Activated CD4-positive, alpha-beta memory T cell treated with anti-CD3 and anti-CD28 coated beads for 36 hours (primary cell): ENCODE measurements at regions of chr4 and their contacts with region 1.

Region 1: GRCh38 chr4:48906206-48907173 is at the start of gene OCIAD2:
- DNase-seq: peak; percentile 90
- H3K4me3 Mint-ChIP-seq: peak within 1 kb of the TSS; percentile 84
- H3K27ac Mint-ChIP-seq: peak within 1 kb of the TSS; percentile 88
- H3K4me1 Mint-ChIP-seq: peaks cover 46% of the 10 kb centered on the region
- H3K27me3 Mint-ChIP-seq: no peaks in the 10 kb centered on the region
- total RNA-seq, gene OCIAD2: 54.2 to 71.6 TPM

Region 2: GRCh38 chr4:48212165-48212564 is 694.3 kb before region 1 on chr4:
- CTCF ChIA-PET with region 1: no interaction called
- POLR2A ChIA-PET with region 1: no interaction called
- intact Hi-C with region 1: no loop called
- DNase-seq: no peak
- H3K4me3 Mint-ChIP-seq: no peak overlapping the region
- H3K27ac Mint-ChIP-seq: no peak overlapping the region
- H3K4me1 Mint-ChIP-seq: no peaks in the 10 kb centered on the region
- H3K27me3 Mint-ChIP-seq: no peaks in the 10 kb centered on the region

Region 3: DNA sequence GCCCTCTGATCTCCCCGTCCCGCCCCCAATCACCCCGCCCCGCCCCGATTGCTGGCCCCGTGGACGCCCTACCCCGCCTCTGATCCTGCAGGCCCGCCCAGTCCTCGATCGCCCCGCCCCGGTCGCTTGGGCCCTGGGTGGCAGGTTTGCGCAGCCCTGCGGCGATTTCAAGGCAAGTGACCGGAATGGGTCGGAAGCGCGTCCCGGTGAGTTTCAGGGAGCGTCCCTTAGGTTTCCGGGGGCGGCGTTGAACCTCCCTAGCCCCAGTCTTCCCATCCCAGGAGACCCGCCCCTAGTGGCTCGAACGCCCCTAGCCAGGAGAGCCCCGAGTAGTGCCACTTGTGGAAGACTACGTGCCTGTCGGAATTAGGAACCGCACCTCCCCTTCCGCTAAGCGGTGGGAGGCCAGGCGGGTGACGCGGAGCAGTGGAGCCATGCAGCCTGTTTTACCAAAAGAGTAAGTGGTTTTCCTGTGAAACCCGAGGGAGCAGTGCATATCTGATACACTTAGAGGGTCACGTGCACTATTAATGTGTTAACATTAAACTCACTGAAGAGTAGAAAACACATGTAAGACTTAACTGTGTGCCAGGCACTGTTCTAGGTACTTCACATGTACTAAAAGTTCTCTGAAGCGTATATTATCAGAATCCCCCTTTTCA is 636.5 kb before region 1 on chr4:
- CTCF ChIA-PET with region 1: no interaction called
- POLR2A ChIA-PET with region 1: no interaction called
- intact Hi-C with region 1: loop called (anchors 5 kb)
- DNase-seq: peak; percentile 95
- H3K4me3 Mint-ChIP-seq: peak overlapping the region; percentile 91
- H3K27ac Mint-ChIP-seq: peak overlapping the region; percentile 75
- H3K4me1 Mint-ChIP-seq: peaks cover 23% of the 10 kb centered on the region
- H3K27me3 Mint-ChIP-seq: no peaks in the 10 kb centered on the region

Region 4: GRCh38 chr4:48557478-48557877 is 349.0 kb before region 1 on chr4:
- CTCF ChIA-PET with region 1: interaction called, 4 read pairs
- POLR2A ChIA-PET with region 1: no interaction called
- intact Hi-C with region 1: loop called (anchors 5 kb)
- DNase-seq: peak; percentile 26
- H3K4me3 Mint-ChIP-seq: no peak overlapping the region
- H3K27ac Mint-ChIP-seq: no peak overlapping the region
- H3K4me1 Mint-ChIP-seq: peaks cover 4% of the 10 kb centered on the region
- H3K27me3 Mint-ChIP-seq: no peaks in the 10 kb centered on the region

Region 5: GRCh38 chr4:48578132-48578968 is 328.1 kb before region 1 on chr4:
- CTCF ChIA-PET with region 1: interaction called, 3 read pairs
- POLR2A ChIA-PET with region 1: no interaction called
- intact Hi-C with region 1: loop called (anchors 1 kb)
- DNase-seq: peak; percentile 37
- H3K4me3 Mint-ChIP-seq: no peak overlapping the region
- H3K27ac Mint-ChIP-seq: no peak overlapping the region
- H3K4me1 Mint-ChIP-seq: peaks cover 4% of the 10 kb centered on the region
- H3K27me3 Mint-ChIP-seq: no peaks in the 10 kb centered on the region

Region 6: GRCh38 chr4:48830706-48831531 is 75.6 kb before region 1 on chr4 and contains the start of gene OCIAD1:
- CTCF ChIA-PET with region 1: no interaction called
- POLR2A ChIA-PET with region 1: interaction called, 5 read pairs
- intact Hi-C with region 1: loop called (anchors 1 kb)
- DNase-seq: peak; percentile 97
- H3K4me3 Mint-ChIP-seq: peak within 1 kb of the TSS; percentile 100
- H3K27ac Mint-ChIP-seq: peak within 1 kb of the TSS; percentile 99
- H3K4me1 Mint-ChIP-seq: peaks cover 19% of the 10 kb centered on the region
- H3K27me3 Mint-ChIP-seq: peaks cover 2% of the 10 kb centered on the region
- total RNA-seq, gene OCIAD1: 100 to 107 TPM

Region 7: GRCh38 chr4:48924416-48924815 is 17.9 kb after region 1 on chr4:
- CTCF ChIA-PET with region 1: no interaction called
- POLR2A ChIA-PET with region 1: no interaction called
- intact Hi-C with region 1: no loop called
- DNase-seq: no peak
- H3K4me3 Mint-ChIP-seq: no peak overlapping the region
- H3K27ac Mint-ChIP-seq: no peak overlapping the region
- H3K4me1 Mint-ChIP-seq: peaks cover 4% of the 10 kb centered on the region
- H3K27me3 Mint-ChIP-seq: no peaks in the 10 kb centered on the region

Region 8: GRCh38 chr4:48944756-48945241 is 38.3 kb after region 1 on chr4:
- CTCF ChIA-PET with region 1: interaction called, 6 read pairs
- POLR2A ChIA-PET with region 1: no interaction called
- intact Hi-C with region 1: loop called (anchors 2 kb)
- DNase-seq: peak; percentile 65
- H3K4me3 Mint-ChIP-seq: no peak overlapping the region
- H3K27ac Mint-ChIP-seq: no peak overlapping the region
- H3K4me1 Mint-ChIP-seq: peaks cover 9% of the 10 kb centered on the region
- H3K27me3 Mint-ChIP-seq: peaks cover 2% of the 10 kb centered on the region

Region 9: DNA sequence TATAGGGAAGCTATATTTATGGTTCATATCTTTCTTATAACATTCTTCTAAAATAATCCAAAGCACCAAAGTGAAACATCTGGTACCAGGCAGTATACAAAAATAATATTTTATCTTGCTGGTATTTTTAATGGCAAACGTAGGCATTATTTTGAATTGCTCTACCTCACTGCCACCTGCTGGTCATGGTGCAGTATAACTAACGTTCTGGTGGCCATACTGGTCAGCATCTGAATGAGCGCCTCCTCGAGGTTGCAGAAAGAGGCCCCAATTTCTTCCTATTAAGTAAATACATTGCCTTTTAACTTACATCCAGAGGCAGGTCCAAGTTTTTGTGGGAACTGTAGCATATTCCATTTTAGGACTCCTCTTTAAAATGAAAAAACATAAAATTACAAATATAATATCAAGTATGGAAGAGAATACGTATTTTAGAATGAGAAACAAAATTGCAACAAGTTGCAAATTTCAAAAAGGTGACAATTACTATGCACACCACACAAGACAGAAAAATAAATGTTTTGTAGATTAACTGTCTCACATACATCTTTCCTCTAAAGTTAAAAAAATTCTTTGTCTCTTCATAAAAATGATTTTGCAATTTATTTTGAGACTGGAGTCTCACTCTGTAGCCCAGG is 56.7 kb after region 1 on chr4:
- CTCF ChIA-PET with region 1: no interaction called
- POLR2A ChIA-PET with region 1: no interaction called
- intact Hi-C with region 1: loop called (anchors 2 kb)
- DNase-seq: peak; percentile 77
- H3K4me3 Mint-ChIP-seq: no peak overlapping the region
- H3K27ac Mint-ChIP-seq: no peak overlapping the region
- H3K4me1 Mint-ChIP-seq: no peaks in the 10 kb centered on the region
- H3K27me3 Mint-ChIP-seq: no peaks in the 10 kb centered on the region